B cell (primary cell): ENCODE measurements at regions of chr1 and their contacts with region 1.

Region 1: GRCh38 chr1:160726498-160727315 is 12.3 kb upstream of the SLAMF7 start:
- DNase-seq: peak; percentile 88
- ATAC-seq: peak; percentile 93
- H3K4me3 ChIP-seq: peak overlapping the region in 1 of 5 experiments; percentile 17
- H3K4me3 Mint-ChIP-seq: no peak overlapping the region
- H3K27ac ChIP-seq: no peak overlapping the region
- H3K27ac Mint-ChIP-seq: no peak overlapping the region
- H3K4me1 ChIP-seq: peaks cover 8 to 12% of the 10 kb centered on the region in 2 donors
- H3K4me1 Mint-ChIP-seq: peaks cover 10% of the 10 kb centered on the region
- H3K27me3 ChIP-seq: no peaks in the 10 kb centered on the region
- H3K27me3 Mint-ChIP-seq: no peaks in the 10 kb centered on the region
- CTCF ChIP-seq: peak; percentile 99

Region 2: GRCh38 chr1:160293020-160293968 is 433.4 kb before region 1 on chr1:
- CTCF ChIA-PET with region 1: no interaction called
- POLR2A ChIA-PET with region 1: no interaction called
- intact Hi-C with region 1: no loop called
- DNase-seq: no peak
- ATAC-seq: no peak
- H3K4me3 ChIP-seq: no peak overlapping the region
- H3K4me3 Mint-ChIP-seq: no peak overlapping the region
- H3K27ac ChIP-seq: no peak overlapping the region
- H3K27ac Mint-ChIP-seq: no peak overlapping the region
- H3K4me1 ChIP-seq: no peaks in the 10 kb centered on the region
- H3K4me1 Mint-ChIP-seq: peaks cover 3% of the 10 kb centered on the region
- H3K27me3 ChIP-seq: no peaks in the 10 kb centered on the region
- H3K27me3 Mint-ChIP-seq: no peaks in the 10 kb centered on the region
- CTCF ChIP-seq: no peak

Region 3: GRCh38 chr1:160681067-160681890 is 45.4 kb before region 1 on chr1:
- CTCF ChIA-PET with region 1: interaction called, 80 read pairs
- POLR2A ChIA-PET with region 1: no interaction called
- intact Hi-C with region 1: loop called (anchors 1 kb)
- DNase-seq: peak; percentile 89
- ATAC-seq: peak; percentile 93
- H3K4me3 ChIP-seq: no peak overlapping the region
- H3K4me3 Mint-ChIP-seq: no peak overlapping the region
- H3K27ac ChIP-seq: peak overlapping the region in 1 of 2 donors; percentile 82
- H3K27ac Mint-ChIP-seq: peak overlapping the region; percentile 72
- H3K4me1 ChIP-seq: peaks cover 38 to 45% of the 10 kb centered on the region in 2 donors
- H3K4me1 Mint-ChIP-seq: peaks cover 51% of the 10 kb centered on the region
- H3K27me3 ChIP-seq: no peaks in the 10 kb centered on the region
- H3K27me3 Mint-ChIP-seq: no peaks in the 10 kb centered on the region
- CTCF ChIP-seq: peak; percentile 92

Region 4: DNA sequence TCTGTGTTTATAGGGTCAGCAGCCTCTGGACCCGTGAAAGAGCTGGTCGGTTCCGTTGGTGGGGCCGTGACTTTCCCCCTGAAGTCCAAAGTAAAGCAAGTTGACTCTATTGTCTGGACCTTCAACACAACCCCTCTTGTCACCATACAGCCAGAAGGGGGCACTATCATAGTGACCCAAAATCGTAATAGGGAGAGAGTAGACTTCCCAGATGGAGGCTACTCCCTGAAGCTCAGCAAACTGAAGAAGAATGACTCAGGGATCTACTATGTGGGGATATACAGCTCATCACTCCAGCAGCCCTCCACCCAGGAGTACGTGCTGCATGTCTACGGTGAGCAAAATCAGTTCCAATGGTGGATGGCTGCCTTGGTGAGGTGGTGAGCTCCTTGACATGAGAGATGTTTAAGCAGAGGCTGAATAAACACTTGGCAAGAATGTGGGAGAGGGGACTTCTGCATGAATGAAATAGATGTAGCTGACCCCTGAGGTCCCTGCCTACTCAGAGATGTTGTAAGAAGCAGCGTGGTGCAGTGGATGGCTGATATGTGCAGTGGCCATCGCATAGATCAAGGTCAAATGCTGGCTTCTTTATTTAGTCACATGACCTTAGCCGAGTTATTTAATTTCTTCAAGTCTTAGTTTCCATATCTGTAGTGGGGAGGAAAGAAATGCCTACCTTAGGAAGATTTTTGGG is 21.6 kb after region 1 on chr1:
- CTCF ChIA-PET with region 1: interaction called, 12 read pairs
- POLR2A ChIA-PET with region 1: no interaction called
- intact Hi-C with region 1: no loop called
- DNase-seq: no peak
- ATAC-seq: no peak
- H3K4me3 ChIP-seq: no peak overlapping the region
- H3K4me3 Mint-ChIP-seq: no peak overlapping the region
- H3K27ac ChIP-seq: no peak overlapping the region
- H3K27ac Mint-ChIP-seq: no peak overlapping the region
- H3K4me1 ChIP-seq: peaks cover 8 to 11% of the 10 kb centered on the region in 2 donors
- H3K4me1 Mint-ChIP-seq: peaks cover 30% of the 10 kb centered on the region
- H3K27me3 ChIP-seq: no peaks in the 10 kb centered on the region
- H3K27me3 Mint-ChIP-seq: no peaks in the 10 kb centered on the region
- CTCF ChIP-seq: peak; percentile 30

Region 5: GRCh38 chr1:160795951-160796383 is 69.3 kb after region 1 on chr1 and contains the start of gene LY9:
- CTCF ChIA-PET with region 1: interaction called, 50 read pairs
- POLR2A ChIA-PET with region 1: no interaction called
- intact Hi-C with region 1: no loop called
- DNase-seq: peak; percentile 96
- ATAC-seq: peak; percentile 93
- H3K4me3 ChIP-seq: peak within 1 kb of the TSS; percentile 41 to 87 (median 63)
- H3K4me3 Mint-ChIP-seq: peak within 1 kb of the TSS; percentile 99
- H3K27ac ChIP-seq: peak within 1 kb of the TSS; percentile 95 to 98
- H3K27ac Mint-ChIP-seq: peak within 1 kb of the TSS; percentile 98
- H3K4me1 ChIP-seq: peaks cover 62 to 68% of the 10 kb centered on the region in 2 donors
- H3K4me1 Mint-ChIP-seq: peaks cover 68% of the 10 kb centered on the region
- H3K27me3 ChIP-seq: no peaks in the 10 kb centered on the region
- H3K27me3 Mint-ChIP-seq: no peaks in the 10 kb centered on the region
- CTCF ChIP-seq: no peak
- total RNA-seq, gene LY9: 365 and 367 TPM in 2 replicates

Region 6: DNA sequence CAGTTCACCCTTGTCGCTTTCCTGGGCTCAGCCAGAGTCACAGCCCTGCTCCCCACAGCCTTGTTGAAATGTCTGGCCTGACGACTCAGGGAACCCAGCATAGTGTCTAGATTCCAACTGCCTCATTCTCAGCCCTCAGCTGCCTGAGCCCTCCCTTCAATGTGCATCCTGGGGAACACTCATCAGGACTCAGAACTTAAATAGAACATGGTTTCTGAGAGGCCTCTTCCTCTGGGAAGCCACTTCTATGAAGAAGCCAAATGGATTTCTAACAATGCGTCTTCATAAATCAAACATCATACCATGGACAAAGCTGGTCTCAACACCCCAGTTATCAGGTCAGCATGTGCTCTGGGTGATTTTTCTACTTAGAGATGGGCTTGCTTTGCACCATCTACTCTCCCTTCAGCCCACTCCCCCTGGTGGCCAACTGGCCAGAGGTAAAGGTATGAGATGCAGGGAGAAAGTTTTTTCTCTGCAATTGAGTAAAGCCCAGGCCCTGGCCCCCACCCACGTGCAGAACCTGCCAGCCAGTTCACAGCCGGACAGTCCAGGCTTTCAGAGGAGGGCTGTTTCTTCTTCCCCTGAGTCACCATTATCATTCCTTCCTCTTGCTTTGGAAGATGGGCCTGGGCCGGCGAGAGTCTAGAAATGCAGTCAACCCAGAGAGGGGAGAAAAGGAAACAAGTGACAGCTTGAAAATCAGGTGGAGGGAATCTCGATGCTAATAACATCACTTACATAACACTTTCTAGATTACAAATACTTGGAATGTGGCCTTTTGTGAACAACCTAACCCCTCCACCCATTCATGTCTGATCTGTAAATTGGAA is 103.8 kb after region 1 on chr1:
- CTCF ChIA-PET with region 1: interaction called, 68 read pairs
- POLR2A ChIA-PET with region 1: no interaction called
- intact Hi-C with region 1: loop called (anchors 1 kb)
- DNase-seq: peak; percentile 84
- ATAC-seq: peak; percentile 74
- H3K4me3 ChIP-seq: no peak overlapping the region
- H3K4me3 Mint-ChIP-seq: no peak overlapping the region
- H3K27ac ChIP-seq: peak overlapping the region in 1 of 2 donors; percentile 14
- H3K27ac Mint-ChIP-seq: peak overlapping the region; percentile 77
- H3K4me1 ChIP-seq: no peaks in the 10 kb centered on the region
- H3K4me1 Mint-ChIP-seq: peaks cover 10% of the 10 kb centered on the region
- H3K27me3 ChIP-seq: no peaks in the 10 kb centered on the region
- H3K27me3 Mint-ChIP-seq: no peaks in the 10 kb centered on the region
- CTCF ChIP-seq: peak; percentile 83

Region 7: GRCh38 chr1:160997323-160998038 is 270.8 kb after region 1 on chr1:
- CTCF ChIA-PET with region 1: interaction called, 15 read pairs
- POLR2A ChIA-PET with region 1: no interaction called
- intact Hi-C with region 1: no loop called
- DNase-seq: peak; percentile 69
- ATAC-seq: peak; percentile 82
- H3K4me3 ChIP-seq: no peak overlapping the region
- H3K4me3 Mint-ChIP-seq: no peak overlapping the region
- H3K27ac ChIP-seq: peak overlapping the region; percentile 15 to 51
- H3K27ac Mint-ChIP-seq: peak overlapping the region; percentile 68
- H3K4me1 ChIP-seq: peaks cover 0 to 5% of the 10 kb centered on the region in 2 donors
- H3K4me1 Mint-ChIP-seq: peaks cover 4% of the 10 kb centered on the region
- H3K27me3 ChIP-seq: no peaks in the 10 kb centered on the region
- H3K27me3 Mint-ChIP-seq: no peaks in the 10 kb centered on the region
- CTCF ChIP-seq: peak; percentile 52